A673 (cell line): ENCODE measurements at regions of chr3 and their contacts with region 1.

Region 1: GRCh38 chr3:32177702-32178198 is 60.7 kb upstream of the CMTM8 start:
- DNase-seq: peak; percentile 83
- H3K4me3 ChIP-seq: no peak overlapping the region
- H3K27ac ChIP-seq: no peak overlapping the region
- H3K4me1 ChIP-seq: no peaks in the 10 kb centered on the region
- H3K27me3 ChIP-seq: no peaks in the 10 kb centered on the region
- CTCF ChIP-seq: peak; percentile 77

Region 2: GRCh38 chr3:31247850-31248562 is 929.7 kb before region 1 on chr3:
- CTCF ChIA-PET with region 1: no interaction called
- POLR2A ChIA-PET with region 1: no interaction called
- intact Hi-C with region 1: no loop called
- DNase-seq: no peak
- H3K4me3 ChIP-seq: no peak overlapping the region
- H3K27ac ChIP-seq: no peak overlapping the region
- H3K4me1 ChIP-seq: no peaks in the 10 kb centered on the region
- H3K27me3 ChIP-seq: no peaks in the 10 kb centered on the region
- CTCF ChIP-seq: no peak

Region 3: DNA sequence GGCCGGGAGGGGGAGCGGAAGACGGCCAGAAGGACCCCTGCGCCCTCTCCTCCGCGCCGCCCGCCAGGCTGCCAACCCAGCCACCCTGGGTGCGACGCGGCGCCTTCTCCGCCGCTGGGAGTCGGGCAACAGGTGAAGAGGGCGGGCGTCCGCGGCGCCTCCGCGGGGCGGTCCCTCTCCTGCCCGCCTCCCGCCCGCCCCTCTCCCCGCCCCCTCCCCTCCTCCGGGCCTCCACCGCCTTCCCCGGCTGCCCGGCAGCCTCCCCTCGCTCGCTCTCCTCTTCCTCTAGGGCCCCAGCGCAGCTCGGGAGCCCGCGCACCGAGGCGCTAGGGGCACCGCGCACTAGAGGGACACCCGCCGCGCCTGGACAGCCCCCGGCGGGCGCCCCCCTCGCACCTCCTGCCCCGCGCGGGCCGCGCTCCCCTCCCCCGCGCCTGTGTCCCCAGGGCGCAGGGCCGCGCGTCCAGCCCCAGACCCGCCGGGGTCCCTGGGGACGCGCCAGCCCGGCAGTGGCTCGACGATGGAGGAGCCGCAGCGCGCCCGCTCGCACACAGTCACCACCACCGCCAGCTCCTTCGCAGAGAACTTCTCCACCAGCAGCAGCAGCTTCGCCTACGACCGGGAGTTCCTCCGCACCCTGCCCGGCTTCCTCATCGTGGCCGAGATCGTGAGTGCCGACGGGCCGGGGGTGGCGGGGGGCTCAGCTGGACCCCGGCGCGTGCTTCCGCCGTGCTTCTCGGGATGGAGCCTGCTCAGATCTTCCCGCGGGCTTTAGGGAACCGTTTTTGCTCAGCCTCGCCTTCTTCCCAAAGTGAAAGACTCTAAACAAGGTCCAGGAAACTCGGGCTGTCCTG is 60.9 kb after region 1 on chr3 and contains the start of gene CMTM8:
- CTCF ChIA-PET with region 1: no interaction called
- POLR2A ChIA-PET with region 1: no interaction called
- intact Hi-C with region 1: loop called (anchors 5 kb)
- DNase-seq: peak; percentile 54
- H3K4me3 ChIP-seq: peak within 1 kb of the TSS; percentile 66
- H3K27ac ChIP-seq: no peak within 1 kb of the TSS
- H3K4me1 ChIP-seq: no peaks in the 10 kb centered on the region
- H3K27me3 ChIP-seq: peaks cover 23% of the 10 kb centered on the region
- CTCF ChIP-seq: no peak
- total RNA-seq, gene CMTM8: 1.7 and 2.1 TPM in 2 replicates

Region 4: GRCh38 chr3:32296256-32297204 is 118.8 kb after region 1 on chr3:
- CTCF ChIA-PET with region 1: no interaction called
- POLR2A ChIA-PET with region 1: no interaction called
- intact Hi-C with region 1: loop called (anchors 1 kb)
- DNase-seq: peak; percentile 67
- H3K4me3 ChIP-seq: no peak overlapping the region
- H3K27ac ChIP-seq: no peak overlapping the region
- H3K4me1 ChIP-seq: no peaks in the 10 kb centered on the region
- H3K27me3 ChIP-seq: no peaks in the 10 kb centered on the region
- CTCF ChIP-seq: peak; percentile 87

Region 5: DNA sequence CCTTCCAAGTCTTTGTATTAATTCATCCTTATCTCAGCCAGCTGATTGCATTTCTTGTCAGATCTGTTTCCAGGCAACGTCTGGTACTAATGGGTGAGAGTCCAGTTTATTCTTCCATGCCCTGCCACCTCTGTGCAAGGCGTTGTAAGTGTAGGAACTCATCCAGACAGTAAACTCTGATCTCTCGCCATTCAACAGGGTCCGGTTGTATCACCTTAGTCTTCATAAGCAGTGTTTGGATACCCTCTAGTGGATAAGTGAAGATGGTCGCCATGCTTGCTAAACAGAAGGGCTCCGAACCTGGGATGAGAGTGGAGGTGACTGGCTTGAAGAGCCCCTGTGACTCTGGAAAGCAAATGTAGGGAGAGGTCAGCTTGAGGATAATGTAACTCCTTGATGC is 162.3 kb after region 1 on chr3:
- CTCF ChIA-PET with region 1: no interaction called
- POLR2A ChIA-PET with region 1: no interaction called
- intact Hi-C with region 1: loop called (anchors 1 kb)
- DNase-seq: peak; percentile 50
- H3K4me3 ChIP-seq: no peak overlapping the region
- H3K27ac ChIP-seq: no peak overlapping the region
- H3K4me1 ChIP-seq: no peaks in the 10 kb centered on the region
- H3K27me3 ChIP-seq: no peaks in the 10 kb centered on the region
- CTCF ChIP-seq: peak; percentile 53

Region 6: DNA sequence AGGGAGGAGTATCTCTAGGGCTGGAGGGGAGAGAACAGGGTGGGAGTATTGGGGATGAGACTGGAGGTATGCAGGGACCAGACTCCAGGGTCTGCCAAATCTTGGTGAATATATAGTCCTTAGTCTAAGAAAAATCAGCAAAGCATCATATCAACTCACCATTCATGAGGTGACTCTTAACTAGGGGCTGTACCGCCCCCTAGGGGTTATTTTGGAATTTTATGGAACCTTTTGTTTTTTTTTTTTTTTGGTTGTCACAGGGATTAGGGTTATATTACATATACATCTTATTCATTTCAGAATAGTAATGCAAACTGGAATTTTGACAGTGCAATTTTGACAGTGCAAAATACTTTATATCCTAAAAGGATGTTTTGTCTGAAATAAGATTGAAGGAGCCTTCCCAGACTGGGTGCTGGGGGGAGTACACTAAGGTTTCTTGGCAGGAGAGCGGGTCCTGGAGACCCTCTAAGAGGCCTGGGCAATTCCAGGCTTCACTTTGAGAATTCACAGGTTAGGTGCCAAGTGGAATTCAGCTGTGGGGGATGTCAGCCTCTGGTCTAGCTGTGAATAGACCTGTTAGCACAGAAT is 221.4 kb after region 1 on chr3:
- CTCF ChIA-PET with region 1: no interaction called
- POLR2A ChIA-PET with region 1: no interaction called
- intact Hi-C with region 1: loop called (anchors 2 kb)
- DNase-seq: peak; percentile 75
- H3K4me3 ChIP-seq: no peak overlapping the region
- H3K27ac ChIP-seq: no peak overlapping the region
- H3K4me1 ChIP-seq: peaks cover 10% of the 10 kb centered on the region
- H3K27me3 ChIP-seq: peaks cover 6% of the 10 kb centered on the region
- CTCF ChIP-seq: peak; percentile 67

Region 7: DNA sequence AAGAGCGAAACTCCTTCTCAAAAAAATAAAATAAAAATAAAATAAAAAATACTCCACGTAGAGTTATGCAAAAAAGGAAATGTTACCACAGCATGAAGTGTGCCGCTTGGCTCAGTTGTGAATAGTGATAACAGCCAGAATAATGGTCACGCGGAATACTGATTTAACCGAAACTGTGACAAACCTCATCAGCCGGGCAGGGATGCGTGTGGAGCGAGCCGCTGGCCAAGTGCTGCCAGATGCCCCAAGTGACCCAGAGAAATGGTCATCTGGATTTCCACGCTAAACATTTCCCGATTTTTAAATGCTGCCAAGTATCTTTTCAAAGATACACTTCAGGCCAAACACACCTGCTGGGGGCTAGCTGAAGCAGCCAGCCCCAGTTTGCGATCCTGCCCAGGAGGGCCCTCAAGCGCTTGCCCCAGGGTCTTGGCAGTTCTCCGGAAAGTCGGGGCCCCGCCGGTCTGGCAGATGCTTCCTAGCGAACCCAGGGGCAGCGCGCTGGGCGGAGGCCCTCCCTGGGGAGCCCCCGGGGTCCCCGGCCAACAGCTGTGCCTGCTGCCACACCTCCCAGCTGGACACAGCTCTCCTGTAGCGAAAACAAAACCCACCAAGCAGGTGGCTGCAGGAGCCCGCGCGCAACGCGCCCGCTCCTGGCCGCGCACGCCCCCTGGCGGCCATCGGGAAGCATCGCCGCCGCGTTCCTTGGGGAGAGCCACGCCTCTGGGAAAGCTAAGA is 289.8 kb after region 1 on chr3:
- CTCF ChIA-PET with region 1: no interaction called
- POLR2A ChIA-PET with region 1: no interaction called
- intact Hi-C with region 1: loop called (anchors 1 kb)
- DNase-seq: peak; percentile 73
- H3K4me3 ChIP-seq: peak overlapping the region; percentile 35
- H3K27ac ChIP-seq: no peak overlapping the region
- H3K4me1 ChIP-seq: no peaks in the 10 kb centered on the region
- H3K27me3 ChIP-seq: no peaks in the 10 kb centered on the region
- CTCF ChIP-seq: peak; percentile 98

Region 8: GRCh38 chr3:32667122-32667521 is 489.4 kb after region 1 on chr3:
- CTCF ChIA-PET with region 1: interaction called, 3 read pairs
- POLR2A ChIA-PET with region 1: no interaction called
- intact Hi-C with region 1: loop called (anchors 5 kb)
- DNase-seq: no peak
- H3K4me3 ChIP-seq: no peak overlapping the region
- H3K27ac ChIP-seq: no peak overlapping the region
- H3K4me1 ChIP-seq: no peaks in the 10 kb centered on the region
- H3K27me3 ChIP-seq: peaks cover 4% of the 10 kb centered on the region
- CTCF ChIP-seq: no peak